Activated CD8-positive, alpha-beta T cell treated with anti-CD3 and anti-CD28 coated beads, Interleukin-2, amount 10 ng/mL, durations not matched to agents 7 days and 5 days (primary cell): ENCODE measurements at regions of chr6 and their contacts with region 1.

Region 1: GRCh38 chr6:130697995-130698535 is 129.1 kb upstream of the SMLR1 start:
- DNase-seq: peak; percentile 85
- ATAC-seq: peak; percentile 99
- H3K4me3 Mint-ChIP-seq: no peak overlapping the region
- H3K27ac Mint-ChIP-seq: peak overlapping the region; percentile 80
- H3K4me1 Mint-ChIP-seq: peaks cover 56% of the 10 kb centered on the region
- H3K27me3 Mint-ChIP-seq: no peaks in the 10 kb centered on the region

Region 2: DNA sequence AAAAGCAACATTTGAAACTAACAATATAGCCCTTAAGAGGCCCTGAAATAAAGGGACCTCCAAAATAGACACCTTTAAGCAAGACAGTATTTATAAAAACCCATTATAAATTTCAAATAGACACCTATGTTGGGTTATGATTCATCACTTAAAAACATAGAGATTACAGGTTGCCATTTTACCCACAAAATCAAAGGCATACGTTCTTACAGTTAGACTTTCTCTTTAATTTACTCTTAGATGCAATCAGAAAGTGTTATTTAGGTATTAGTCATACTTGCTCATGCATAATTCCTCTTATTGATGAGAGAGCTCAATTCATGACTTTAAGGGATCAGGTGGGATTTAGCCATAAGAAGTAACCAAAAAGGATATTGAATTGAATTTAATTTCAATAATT is 383.8 kb before region 1 on chr6:
- CTCF ChIA-PET with region 1: interaction called, 16 read pairs
- POLR2A ChIA-PET with region 1: no interaction called
- DNase-seq: no peak
- ATAC-seq: no peak
- H3K4me3 Mint-ChIP-seq: no peak overlapping the region
- H3K27ac Mint-ChIP-seq: no peak overlapping the region
- H3K4me1 Mint-ChIP-seq: peaks cover 10% of the 10 kb centered on the region
- H3K27me3 Mint-ChIP-seq: peaks cover 2% of the 10 kb centered on the region

Region 3: GRCh38 chr6:130381459-130382380 is 316.3 kb before region 1 on chr6:
- CTCF ChIA-PET with region 1: interaction called, 20 read pairs
- POLR2A ChIA-PET with region 1: no interaction called
- DNase-seq: peak; percentile 75
- ATAC-seq: peak; percentile 99
- H3K4me3 Mint-ChIP-seq: peak overlapping the region; percentile 0
- H3K27ac Mint-ChIP-seq: peak overlapping the region; percentile 67
- H3K4me1 Mint-ChIP-seq: peaks cover 27% of the 10 kb centered on the region
- H3K27me3 Mint-ChIP-seq: peaks cover 7% of the 10 kb centered on the region

Region 4: DNA sequence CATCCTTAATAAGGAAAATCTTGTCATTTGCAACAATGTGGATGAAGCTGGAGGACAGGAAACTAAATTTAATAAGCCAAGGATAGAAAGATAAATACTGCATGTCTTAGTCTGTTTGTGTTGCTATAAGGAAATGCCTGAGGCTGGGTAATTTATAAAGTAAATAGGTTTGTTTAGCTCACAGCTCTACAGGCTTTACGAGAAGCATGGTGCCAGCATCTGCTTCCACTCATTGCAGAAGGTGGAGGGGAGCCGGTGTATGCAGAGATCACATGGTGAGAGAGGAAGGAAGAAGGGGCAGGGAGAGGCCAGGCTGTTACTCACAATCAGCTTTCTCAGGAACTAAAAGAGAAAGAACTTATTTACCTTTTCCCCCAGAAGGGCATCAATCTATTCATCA is 10.3 kb after region 1 on chr6:
- CTCF ChIA-PET with region 1: interaction called, 12 read pairs
- POLR2A ChIA-PET with region 1: no interaction called
- DNase-seq: no peak
- ATAC-seq: no peak
- H3K4me3 Mint-ChIP-seq: no peak overlapping the region
- H3K27ac Mint-ChIP-seq: no peak overlapping the region
- H3K4me1 Mint-ChIP-seq: peaks cover 14% of the 10 kb centered on the region
- H3K27me3 Mint-ChIP-seq: no peaks in the 10 kb centered on the region

Region 5: DNA sequence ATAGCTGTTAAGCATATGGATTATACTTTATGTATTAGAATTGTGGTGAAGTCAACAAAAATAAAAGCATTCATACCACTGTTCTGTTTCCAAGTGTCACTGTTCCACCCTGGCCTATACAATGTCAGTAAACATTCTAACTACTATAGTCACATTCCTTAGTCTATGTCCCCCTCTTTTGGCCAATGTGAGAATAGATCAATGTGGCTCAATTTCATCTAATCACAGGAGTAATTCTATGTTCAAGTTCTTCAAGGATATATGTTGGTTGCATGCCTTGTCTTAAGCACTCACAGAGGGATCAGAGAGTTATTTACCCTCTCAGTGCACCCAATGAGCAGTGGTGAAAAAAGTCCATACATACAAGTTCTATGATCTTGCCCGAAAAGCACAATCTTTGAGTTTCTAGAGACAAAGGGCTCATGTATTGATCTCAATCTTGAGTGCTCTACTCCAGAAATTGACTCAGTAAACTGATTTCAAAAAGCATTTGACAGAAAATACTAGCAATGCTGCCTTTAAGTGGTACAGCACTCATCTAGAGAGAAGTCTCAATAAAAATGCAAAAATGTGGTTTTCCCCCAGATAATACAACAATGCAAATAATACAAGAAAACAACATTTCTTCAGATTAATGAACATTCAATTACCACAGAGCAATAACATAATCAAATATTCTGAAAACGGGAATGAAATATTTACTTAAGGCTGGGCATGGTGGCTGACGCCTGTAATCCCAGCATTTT is 145.7 kb after region 1 on chr6:
- CTCF ChIA-PET with region 1: interaction called, 13 read pairs
- POLR2A ChIA-PET with region 1: no interaction called
- DNase-seq: peak; percentile 34
- ATAC-seq: peak; percentile 87
- H3K4me3 Mint-ChIP-seq: no peak overlapping the region
- H3K27ac Mint-ChIP-seq: no peak overlapping the region
- H3K4me1 Mint-ChIP-seq: peaks cover 8% of the 10 kb centered on the region
- H3K27me3 Mint-ChIP-seq: no peaks in the 10 kb centered on the region

Region 6: DNA sequence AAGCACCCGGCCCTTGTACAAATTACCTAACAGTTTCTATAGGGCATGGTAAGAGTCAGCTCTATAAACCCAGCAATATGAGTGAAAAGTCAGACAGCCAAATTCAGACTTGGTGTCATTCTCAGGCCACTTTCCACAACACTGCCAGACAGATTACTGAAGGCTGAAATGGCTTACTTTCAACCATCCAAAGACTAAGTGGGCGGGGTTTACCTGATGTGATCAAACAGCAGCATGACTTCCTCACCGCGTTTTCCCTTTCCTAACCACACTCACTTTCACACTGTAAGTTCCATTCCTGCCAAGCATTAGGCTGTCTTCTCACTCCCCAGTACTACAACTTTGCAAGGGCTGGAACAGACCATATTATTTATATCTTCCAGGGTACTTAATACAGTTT is 215.1 kb after region 1 on chr6:
- CTCF ChIA-PET with region 1: no interaction called
- POLR2A ChIA-PET with region 1: no interaction called
- DNase-seq: peak; percentile 53
- ATAC-seq: peak; percentile 93
- H3K4me3 Mint-ChIP-seq: no peak overlapping the region
- H3K27ac Mint-ChIP-seq: no peak overlapping the region
- H3K4me1 Mint-ChIP-seq: peaks cover 10% of the 10 kb centered on the region
- H3K27me3 Mint-ChIP-seq: peaks cover 2% of the 10 kb centered on the region